ENCODE measurements at regions of chr15 and their contacts with region 1.

Region 1: GRCh38 chr15:27401471-27401870 is 430.5 kb downstream of the GABRG3 start:
- DNase-seq: no peak
- H3K4me3 ChIP-seq: no peak overlapping the region
- H3K27ac ChIP-seq: no peak overlapping the region
- H3K4me1 ChIP-seq: no peaks in the 10 kb centered on the region
- H3K27me3 ChIP-seq: no peaks in the 10 kb centered on the region
- CTCF ChIP-seq: no peak

Region 2: DNA sequence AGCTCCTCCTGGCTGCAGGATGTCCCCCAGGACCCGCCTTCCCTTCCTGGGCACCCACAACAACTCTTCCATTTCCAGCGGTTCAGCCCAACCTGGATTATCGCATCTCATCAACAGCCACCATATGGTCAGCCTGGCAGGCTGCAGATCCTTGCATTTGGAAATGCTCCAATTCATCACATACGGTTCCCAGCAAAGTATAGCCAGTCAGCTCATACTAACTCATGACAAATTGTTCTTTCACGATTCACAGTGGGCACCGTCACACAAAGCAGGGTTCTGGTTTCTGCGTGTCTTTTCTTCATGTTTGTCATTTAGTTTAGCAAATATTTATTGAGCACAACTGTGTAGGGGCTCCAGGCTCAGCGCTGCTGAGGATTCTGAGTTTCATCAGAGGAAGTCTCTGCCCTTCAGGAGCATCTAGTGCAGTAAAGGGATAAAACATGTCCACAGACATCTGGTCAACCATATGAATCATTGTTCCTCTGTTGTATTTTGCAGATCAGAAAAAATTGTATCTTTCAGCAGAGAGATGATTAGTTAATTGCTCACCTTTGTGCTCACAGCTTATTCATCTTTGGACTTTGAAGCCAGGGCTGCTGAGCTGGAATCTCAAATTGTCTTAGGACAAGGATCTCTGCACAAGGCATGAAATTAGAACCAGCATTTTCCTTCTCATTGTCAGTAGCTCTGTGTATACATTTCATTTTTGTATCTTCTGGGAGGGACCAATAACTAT is 305.4 kb before region 1 on chr15:
- intact Hi-C with region 1: no loop called
- DNase-seq: no peak
- H3K4me3 ChIP-seq: no peak overlapping the region
- H3K27ac ChIP-seq: no peak overlapping the region
- H3K4me1 ChIP-seq: no peaks in the 10 kb centered on the region
- H3K27me3 ChIP-seq: no peaks in the 10 kb centered on the region
- CTCF ChIP-seq: no peak

Region 3: GRCh38 chr15:27358751-27359434 is 42.6 kb before region 1 on chr15:
- intact Hi-C with region 1: no loop called
- DNase-seq: no peak
- H3K4me3 ChIP-seq: no peak overlapping the region
- H3K27ac ChIP-seq: no peak overlapping the region
- H3K4me1 ChIP-seq: no peaks in the 10 kb centered on the region
- H3K27me3 ChIP-seq: peaks cover 0 to 7% of the 10 kb centered on the region in 2 donors
- CTCF ChIP-seq: peak; percentile 26 to 42

Region 4: DNA sequence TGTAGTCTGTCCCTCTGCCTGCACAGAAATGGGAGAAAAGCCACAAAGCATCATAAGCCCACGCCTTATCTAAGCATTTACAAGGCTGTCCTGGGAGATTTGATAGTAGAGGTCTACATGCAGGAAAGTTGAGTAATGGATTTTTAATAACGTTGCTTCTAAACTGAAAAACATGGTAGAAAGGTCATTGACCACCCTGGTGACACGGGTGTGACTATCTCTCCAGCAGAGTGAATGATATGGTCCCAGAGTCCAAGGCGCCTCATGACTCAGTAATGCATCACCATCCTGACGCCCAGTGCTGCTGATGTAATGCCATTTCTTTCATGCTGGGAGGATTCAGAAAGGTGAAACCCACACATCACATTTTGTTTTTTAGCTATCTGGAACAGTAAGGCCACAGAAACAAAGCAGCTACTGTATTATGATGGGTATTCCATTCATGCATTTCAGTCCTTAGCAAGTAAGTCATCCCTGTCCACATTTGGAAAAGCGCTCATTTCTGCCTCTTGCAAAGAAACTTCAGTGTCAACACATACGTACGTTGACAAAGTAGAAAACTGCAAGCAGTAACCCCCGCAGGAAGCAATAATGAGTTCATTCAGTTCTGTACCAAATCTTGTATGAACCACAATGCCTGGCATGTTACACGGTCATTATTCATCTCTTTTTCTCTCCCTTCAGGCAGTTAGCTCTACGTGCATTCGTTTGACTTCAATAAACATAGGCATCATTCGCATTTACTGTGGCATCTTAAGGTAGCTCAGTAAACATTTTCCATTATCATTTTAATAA is 53.0 kb after region 1 on chr15:
- intact Hi-C with region 1: loop called (anchors 5 kb)
- DNase-seq: no peak
- H3K4me3 ChIP-seq: no peak overlapping the region
- H3K27ac ChIP-seq: no peak overlapping the region
- H3K4me1 ChIP-seq: no peaks in the 10 kb centered on the region
- H3K27me3 ChIP-seq: no peaks in the 10 kb centered on the region
- CTCF ChIP-seq: no peak

Region 5: GRCh38 chr15:27464941-27465612 is 63.6 kb after region 1 on chr15:
- intact Hi-C with region 1: no loop called
- DNase-seq: no peak
- H3K4me3 ChIP-seq: no peak overlapping the region
- H3K27ac ChIP-seq: no peak overlapping the region
- H3K4me1 ChIP-seq: no peaks in the 10 kb centered on the region
- H3K27me3 ChIP-seq: no peaks in the 10 kb centered on the region
- CTCF ChIP-seq: no peak

Measured in tibial artery (tissue), 4 donors.